ENCODE measurements at regions of chr6 and their contacts with region 1.

Region 1: GRCh38 chr6:87407901-87408720 is at the start of gene CFAP206:
- DNase-seq: peak; percentile 82
- H3K4me3 Mint-ChIP-seq: peak within 1 kb of the TSS; percentile 84
- H3K27ac Mint-ChIP-seq: peak within 1 kb of the TSS; percentile 64
- H3K4me1 Mint-ChIP-seq: peaks cover 4% of the 10 kb centered on the region
- H3K27me3 Mint-ChIP-seq: peaks cover 10% of the 10 kb centered on the region
- total RNA-seq, gene CFAP206: not detected

Region 2: DNA sequence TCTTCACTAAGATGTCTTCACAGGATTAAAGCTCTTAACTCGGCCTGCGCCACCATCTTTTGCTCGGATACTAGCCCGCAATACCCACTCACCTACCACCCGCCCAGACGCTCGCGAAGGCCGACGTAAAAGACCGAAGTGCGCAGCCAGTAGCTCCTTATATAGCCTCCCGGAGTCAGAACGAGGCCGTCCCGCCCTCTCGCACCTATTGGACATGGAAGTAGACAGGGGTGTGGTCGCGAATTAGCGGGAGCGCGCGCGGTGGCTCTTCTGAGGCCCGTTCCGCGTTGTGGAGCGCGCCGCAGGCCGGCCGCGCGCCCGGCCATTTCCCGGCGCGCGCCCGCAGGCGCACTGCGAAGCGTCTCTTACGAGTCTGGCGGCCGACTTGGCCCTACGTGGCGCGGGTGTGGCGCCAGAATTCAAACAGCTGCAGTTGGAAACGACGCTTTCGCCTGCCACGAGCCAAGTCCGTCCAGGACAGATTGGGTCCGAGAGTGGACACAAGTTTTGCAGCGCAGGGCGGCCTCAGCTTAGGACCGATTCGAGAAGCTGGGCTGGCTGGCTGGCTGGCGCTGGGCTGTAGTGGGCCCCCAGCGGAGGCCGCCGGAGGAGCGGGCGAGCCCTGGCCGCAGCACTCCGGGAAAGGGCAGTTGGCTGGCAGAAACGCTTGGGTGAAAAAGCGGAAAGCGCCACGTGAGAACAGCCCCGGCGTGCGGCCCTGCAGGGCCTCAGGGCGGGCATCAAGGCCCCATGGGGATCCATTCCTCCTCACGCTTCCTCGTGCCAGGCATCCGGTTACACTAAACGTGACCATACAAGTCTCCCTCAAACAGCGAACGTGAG is 1729.3 kb before region 1 on chr6:
- CTCF ChIA-PET with region 1: no interaction called
- POLR2A ChIA-PET with region 1: no interaction called
- intact Hi-C with region 1: loop called (anchors 2 kb)
- DNase-seq: peak; percentile 98
- H3K4me3 Mint-ChIP-seq: peak overlapping the region; percentile 95
- H3K27ac Mint-ChIP-seq: peak overlapping the region; percentile 90
- H3K4me1 Mint-ChIP-seq: peaks cover 34% of the 10 kb centered on the region
- H3K27me3 Mint-ChIP-seq: no peaks in the 10 kb centered on the region

Region 3: DNA sequence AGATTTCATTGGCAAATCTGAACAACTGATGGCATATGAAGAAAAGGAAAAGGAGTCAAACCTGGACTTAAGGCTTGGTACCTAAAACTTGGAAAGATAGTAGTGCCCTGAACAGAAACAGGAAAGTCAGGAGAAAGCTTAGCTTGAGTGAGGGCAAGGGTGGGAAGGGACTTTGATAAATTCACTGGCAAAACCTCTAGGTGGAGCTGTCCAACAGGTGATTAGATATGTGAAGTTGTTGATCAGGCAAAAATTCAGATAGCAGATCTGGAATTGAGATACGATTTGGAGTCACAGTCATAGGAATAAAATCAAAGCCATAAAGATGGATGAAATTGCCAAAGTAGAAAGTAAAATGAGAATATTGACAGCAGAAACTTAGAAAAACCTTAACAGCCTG is 268.9 kb before region 1 on chr6:
- CTCF ChIA-PET with region 1: interaction called, 4 read pairs
- POLR2A ChIA-PET with region 1: no interaction called
- intact Hi-C with region 1: loop called (anchors 5 kb)
- DNase-seq: no peak
- H3K4me3 Mint-ChIP-seq: no peak overlapping the region
- H3K27ac Mint-ChIP-seq: no peak overlapping the region
- H3K4me1 Mint-ChIP-seq: peaks cover 2% of the 10 kb centered on the region
- H3K27me3 Mint-ChIP-seq: peaks cover 4% of the 10 kb centered on the region

Region 4: DNA sequence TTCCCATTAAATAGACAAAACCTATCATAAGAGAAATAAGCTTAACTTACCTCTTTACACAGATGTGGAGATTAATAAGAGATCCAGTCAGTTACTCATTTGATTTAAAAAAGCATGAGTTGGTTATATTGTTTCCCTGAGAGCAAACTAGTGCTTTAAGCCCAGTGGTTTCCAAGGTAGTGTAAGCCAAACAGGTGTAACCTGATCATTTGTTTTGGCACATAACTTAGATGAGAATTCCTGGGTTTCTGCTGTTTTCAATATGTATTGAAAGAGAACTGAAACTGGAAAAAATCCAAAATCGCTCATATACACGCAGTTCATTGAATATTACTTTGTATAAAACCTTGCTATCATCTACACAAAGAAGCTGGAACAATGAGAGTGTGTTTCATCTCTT is 116.2 kb before region 1 on chr6:
- CTCF ChIA-PET with region 1: no interaction called
- POLR2A ChIA-PET with region 1: no interaction called
- intact Hi-C with region 1: no loop called
- DNase-seq: no peak
- H3K4me3 Mint-ChIP-seq: no peak overlapping the region
- H3K27ac Mint-ChIP-seq: no peak overlapping the region
- H3K4me1 Mint-ChIP-seq: no peaks in the 10 kb centered on the region
- H3K27me3 Mint-ChIP-seq: peaks cover 19% of the 10 kb centered on the region

Region 5: DNA sequence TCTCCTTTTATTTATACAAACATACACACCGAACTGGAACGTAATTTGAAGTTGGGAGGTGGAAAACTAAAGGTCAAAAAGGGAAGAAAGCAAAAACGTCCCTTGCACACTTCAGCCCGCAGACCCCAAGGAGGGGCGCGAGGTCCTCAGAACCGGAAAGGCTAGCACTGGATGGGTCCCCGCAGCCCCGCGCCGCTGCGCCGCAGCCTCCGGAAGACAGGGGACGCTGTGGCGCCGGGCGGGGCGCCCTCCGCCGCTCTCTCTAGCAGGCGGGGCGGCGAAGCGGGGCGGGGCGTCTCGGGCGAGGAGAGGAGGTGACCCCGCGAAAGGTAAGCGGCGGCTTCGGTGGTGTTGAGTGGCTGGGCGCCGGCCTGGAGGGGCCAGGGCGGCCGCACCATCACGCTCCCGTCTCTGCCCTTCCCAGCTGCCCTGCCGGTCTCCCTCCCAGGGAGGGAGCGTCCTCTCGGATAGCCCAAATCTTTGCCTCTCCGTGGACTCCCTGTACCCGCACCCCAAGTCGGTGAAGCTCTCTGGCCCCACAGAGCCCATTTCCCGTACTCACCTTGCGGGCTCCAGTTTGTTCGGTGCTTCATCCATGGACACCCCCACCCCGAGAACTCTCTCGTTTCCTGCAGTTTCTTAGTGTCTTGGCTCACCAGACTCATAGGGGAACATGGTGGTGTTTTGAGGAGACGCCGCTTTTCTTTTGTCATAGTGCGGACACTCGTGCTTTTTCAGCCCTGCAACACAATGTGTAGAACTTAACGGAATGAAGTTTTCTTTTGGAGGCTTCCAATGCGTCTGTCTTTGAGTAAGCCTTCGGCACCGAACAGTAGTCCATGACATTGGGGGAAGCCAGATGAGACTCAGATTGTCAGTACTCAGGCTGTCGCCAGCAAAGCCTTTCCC is 85.6 kb before region 1 on chr6 and contains the start of gene SMIM8:
- CTCF ChIA-PET with region 1: interaction called, 3 read pairs
- POLR2A ChIA-PET with region 1: no interaction called
- intact Hi-C with region 1: loop called (anchors 5 kb)
- DNase-seq: peak; percentile 90
- H3K4me3 Mint-ChIP-seq: peak within 1 kb of the TSS; percentile 98
- H3K27ac Mint-ChIP-seq: peak within 1 kb of the TSS; percentile 76
- H3K4me1 Mint-ChIP-seq: peaks cover 15% of the 10 kb centered on the region
- H3K27me3 Mint-ChIP-seq: no peaks in the 10 kb centered on the region
- total RNA-seq, gene SMIM8: 7.6 to 8.1 TPM

Region 6: GRCh38 chr6:87436435-87436834 is 28.3 kb after region 1 on chr6:
- CTCF ChIA-PET with region 1: no interaction called
- POLR2A ChIA-PET with region 1: no interaction called
- intact Hi-C with region 1: no loop called
- DNase-seq: peak; percentile 59
- H3K4me3 Mint-ChIP-seq: no peak overlapping the region
- H3K27ac Mint-ChIP-seq: no peak overlapping the region
- H3K4me1 Mint-ChIP-seq: no peaks in the 10 kb centered on the region
- H3K27me3 Mint-ChIP-seq: peaks cover 2% of the 10 kb centered on the region

Region 7: GRCh38 chr6:87540539-87540938 is 132.4 kb after region 1 on chr6:
- CTCF ChIA-PET with region 1: no interaction called
- POLR2A ChIA-PET with region 1: no interaction called
- intact Hi-C with region 1: no loop called
- DNase-seq: no peak
- H3K4me3 Mint-ChIP-seq: no peak overlapping the region
- H3K27ac Mint-ChIP-seq: no peak overlapping the region
- H3K4me1 Mint-ChIP-seq: no peaks in the 10 kb centered on the region
- H3K27me3 Mint-ChIP-seq: no peaks in the 10 kb centered on the region

Region 8: DNA sequence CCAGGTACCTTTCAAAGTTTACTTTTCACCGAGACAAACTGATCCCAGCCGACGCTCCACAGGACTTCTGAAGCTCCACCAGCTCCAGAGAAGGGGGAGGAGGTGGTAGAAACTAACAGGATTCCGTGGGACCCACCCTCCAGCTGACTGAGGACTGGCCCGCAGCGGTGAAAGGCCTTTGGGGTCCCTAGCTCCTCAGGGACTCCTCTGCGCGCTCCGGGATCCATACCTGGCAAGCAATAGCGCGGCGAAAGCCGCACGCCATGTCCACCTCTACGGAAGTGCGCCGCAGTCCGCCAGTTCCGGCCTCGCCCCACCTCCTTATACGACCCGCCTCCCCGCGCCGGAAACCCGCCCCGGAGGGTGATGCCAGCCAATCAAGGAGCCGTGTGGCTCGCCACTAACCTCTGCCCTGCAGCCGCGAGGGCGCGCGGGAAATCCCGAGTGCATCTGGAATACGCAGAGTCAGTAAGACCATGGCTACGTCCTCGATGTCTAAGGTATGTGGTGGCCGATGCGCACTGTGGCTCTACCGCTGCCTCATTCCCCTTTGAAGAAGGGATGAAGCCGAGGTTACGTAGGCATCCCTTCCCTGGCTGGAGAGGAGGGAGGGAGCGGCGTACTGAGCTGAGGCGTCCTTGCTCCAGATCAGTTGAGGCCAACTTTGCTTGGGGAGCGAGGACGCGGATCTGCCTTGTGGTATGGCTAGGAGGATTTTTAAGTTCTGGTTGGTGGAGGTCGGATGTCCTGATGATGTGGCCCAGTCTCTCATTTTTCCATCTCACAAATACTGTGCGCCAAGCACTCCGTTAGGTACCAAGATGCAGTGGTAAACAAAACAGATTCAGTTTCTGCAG is 181.8 kb after region 1 on chr6 and contains the starts of genes ORC3 and RARS2:
- CTCF ChIA-PET with region 1: no interaction called
- POLR2A ChIA-PET with region 1: no interaction called
- intact Hi-C with region 1: loop called (anchors 1 kb)
- DNase-seq: peak; percentile 98
- H3K4me3 Mint-ChIP-seq: peak within 1 kb of the TSS; percentile 85
- H3K27ac Mint-ChIP-seq: peak within 1 kb of the TSS; percentile 79
- H3K4me1 Mint-ChIP-seq: peaks cover 49% of the 10 kb centered on the region
- H3K27me3 Mint-ChIP-seq: no peaks in the 10 kb centered on the region
- total RNA-seq, gene ORC3: 35.0 to 38.7 TPM
- total RNA-seq, gene RARS2: 20.0 to 20.8 TPM